ENCODE measurements at regions of chr15 and their contacts with region 1.

Region 1: DNA sequence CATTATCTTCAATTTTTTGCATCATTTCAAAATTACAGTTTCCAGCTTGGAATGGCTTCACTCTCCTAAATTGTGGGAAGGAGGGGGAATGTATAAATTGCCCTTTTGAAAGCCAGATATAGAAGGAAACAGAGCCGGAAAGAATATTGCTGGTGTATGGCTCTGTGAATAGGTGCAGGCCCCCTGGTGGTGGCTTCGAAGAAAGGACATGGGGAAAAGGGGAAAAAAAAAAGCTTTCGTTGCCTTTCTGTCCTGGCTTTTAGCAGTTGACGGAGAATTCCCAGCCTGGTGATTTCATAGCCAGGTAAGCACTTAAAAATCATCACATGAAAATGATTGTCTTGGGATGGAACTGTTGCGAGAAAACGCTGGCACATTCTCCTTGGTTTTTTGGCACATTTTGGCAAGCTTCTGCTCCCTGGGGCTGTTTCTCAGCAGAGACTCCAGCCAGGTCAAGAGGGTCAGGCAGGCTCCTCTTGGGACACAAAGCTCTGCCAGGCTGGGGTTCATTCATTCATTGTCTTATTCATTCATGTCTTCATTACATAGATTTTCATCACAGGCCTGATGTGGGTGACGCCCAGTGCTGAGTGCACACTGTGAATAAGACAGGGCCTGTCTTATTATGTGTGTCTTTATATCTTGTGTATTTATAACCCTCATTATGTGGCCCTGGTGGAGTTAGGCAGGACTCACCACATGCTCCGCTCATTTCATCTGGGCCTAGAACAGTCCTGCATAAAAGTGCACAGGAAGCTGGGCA is 300.0 kb upstream of the TPM1 start:
- DNase-seq: peak; percentile 59
- ATAC-seq: peak; percentile 82
- H3K4me3 ChIP-seq: peak overlapping the region in 1 of 2 experiments; percentile 30; a peak in 2 of 4 replicates
- H3K27ac ChIP-seq: no peak overlapping the region
- H3K4me1 ChIP-seq: peaks cover 7% of the 10 kb centered on the region; the same call in 1 of the 2 replicates
- H3K27me3 ChIP-seq: no peaks in the 10 kb centered on the region
- CTCF ChIP-seq: peak; percentile 94

Region 2: GRCh38 chr15:62389885-62390790 is 352.5 kb before region 1 on chr15:
- CTCF ChIA-PET with region 1: interaction called, 11 read pairs
- POLR2A ChIA-PET with region 1: no interaction called
- in situ Hi-C with region 1: no loop called
- intact Hi-C with region 1: no loop called
- DNase-seq: no peak
- ATAC-seq: peak; percentile 88
- H3K4me3 ChIP-seq: peak within 1 kb of the TSS; percentile 84 to 100
- H3K27ac ChIP-seq: peak within 1 kb of the TSS; percentile 94
- H3K4me1 ChIP-seq: peaks cover 5% of the 10 kb centered on the region
- H3K27me3 ChIP-seq: peaks cover 17% of the 10 kb centered on the region
- CTCF ChIP-seq: no peak

Region 3: DNA sequence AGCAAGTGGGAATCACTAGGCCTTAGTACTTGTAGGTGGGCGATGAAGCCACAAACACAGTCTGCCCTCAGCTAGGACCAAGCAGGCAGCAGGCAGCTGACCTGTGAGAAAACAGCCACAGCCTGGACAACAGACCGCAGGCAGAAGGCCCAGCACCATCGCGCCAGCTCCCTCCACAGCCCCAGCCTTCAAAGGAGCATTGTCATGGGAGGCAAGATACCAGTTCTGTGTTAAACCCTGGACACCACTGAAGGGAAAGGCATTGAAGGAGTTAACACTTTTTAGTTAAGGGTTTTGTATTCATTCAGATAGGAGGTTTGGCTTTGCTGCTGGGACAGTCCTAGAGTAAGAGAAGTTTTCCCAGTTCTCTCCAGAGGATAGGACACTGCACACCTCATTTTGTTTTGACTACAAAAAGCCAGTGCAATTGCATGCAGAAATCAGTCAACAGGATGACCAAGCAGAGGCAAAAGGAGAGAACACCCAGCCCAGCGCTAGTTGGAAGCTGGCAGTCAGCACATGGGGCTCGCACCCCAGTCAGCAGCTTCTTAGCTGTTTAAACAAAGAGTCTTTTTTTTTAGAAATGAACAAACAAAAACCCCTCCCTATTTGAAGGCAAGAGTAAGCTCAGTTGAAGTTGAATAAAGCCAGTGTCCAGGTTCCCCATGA is 13.9 kb after region 1 on chr15:
- CTCF ChIA-PET with region 1: interaction called, 11 read pairs
- POLR2A ChIA-PET with region 1: no interaction called
- in situ Hi-C with region 1: no loop called
- intact Hi-C with region 1: no loop called
- DNase-seq: no peak
- ATAC-seq: no peak
- H3K4me3 ChIP-seq: no peak overlapping the region
- H3K27ac ChIP-seq: no peak overlapping the region
- H3K4me1 ChIP-seq: no peaks in the 10 kb centered on the region
- H3K27me3 ChIP-seq: no peaks in the 10 kb centered on the region
- CTCF ChIP-seq: no peak

Region 4: DNA sequence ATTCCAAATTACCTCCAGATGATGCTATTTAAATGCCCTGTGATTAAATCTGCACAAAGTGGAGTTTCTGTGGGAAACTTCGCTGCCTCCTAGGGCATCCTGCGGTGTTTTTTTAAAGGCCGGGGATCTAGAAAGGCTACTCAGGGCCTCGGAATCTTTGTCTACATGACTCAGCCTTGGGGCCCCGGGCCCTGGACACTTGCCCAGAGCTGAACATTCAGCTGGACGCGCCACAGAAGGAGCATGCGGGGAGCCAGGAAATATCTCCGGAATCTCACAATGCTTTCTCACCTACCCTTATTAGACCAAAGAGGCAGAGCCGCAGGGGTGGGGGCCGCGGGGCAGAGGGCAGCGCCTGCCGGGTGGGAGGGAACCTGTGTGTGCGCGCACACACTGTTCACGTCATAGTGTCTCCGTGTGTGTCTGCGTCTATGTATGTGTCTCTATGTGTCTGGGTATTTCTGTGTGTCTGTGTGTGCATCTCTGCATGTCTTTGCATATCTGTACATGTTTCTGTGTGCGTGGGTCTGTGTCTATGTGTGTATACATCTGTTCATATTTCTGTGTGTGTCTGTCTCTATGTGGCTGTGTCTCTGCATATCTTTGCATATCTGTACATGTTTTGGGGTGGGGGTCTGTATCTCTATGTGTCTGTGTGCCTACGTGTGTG is 154.5 kb after region 1 on chr15:
- CTCF ChIA-PET with region 1: no interaction called
- POLR2A ChIA-PET with region 1: no interaction called
- in situ Hi-C with region 1: no loop called
- intact Hi-C with region 1: no loop called
- DNase-seq: peak; percentile 98
- ATAC-seq: peak; percentile 93
- H3K4me3 ChIP-seq: peak overlapping the region; percentile 2 to 23; a peak in 3 of 4 replicates
- H3K27ac ChIP-seq: peak overlapping the region; percentile 99
- H3K4me1 ChIP-seq: peaks cover 55% of the 10 kb centered on the region
- H3K27me3 ChIP-seq: no peaks in the 10 kb centered on the region
- CTCF ChIP-seq: no peak

Region 5: GRCh38 chr15:63104727-63105126 is 362.1 kb after region 1 on chr15:
- CTCF ChIA-PET with region 1: interaction called, 10 read pairs
- POLR2A ChIA-PET with region 1: no interaction called
- in situ Hi-C with region 1: no loop called
- intact Hi-C with region 1: no loop called
- DNase-seq: no peak
- ATAC-seq: no peak
- H3K4me3 ChIP-seq: no peak overlapping the region
- H3K27ac ChIP-seq: no peak overlapping the region
- H3K4me1 ChIP-seq: peaks cover 4% of the 10 kb centered on the region; the same call in 1 of the 2 replicates
- H3K27me3 ChIP-seq: no peaks in the 10 kb centered on the region
- CTCF ChIP-seq: no peak

Region 6: DNA sequence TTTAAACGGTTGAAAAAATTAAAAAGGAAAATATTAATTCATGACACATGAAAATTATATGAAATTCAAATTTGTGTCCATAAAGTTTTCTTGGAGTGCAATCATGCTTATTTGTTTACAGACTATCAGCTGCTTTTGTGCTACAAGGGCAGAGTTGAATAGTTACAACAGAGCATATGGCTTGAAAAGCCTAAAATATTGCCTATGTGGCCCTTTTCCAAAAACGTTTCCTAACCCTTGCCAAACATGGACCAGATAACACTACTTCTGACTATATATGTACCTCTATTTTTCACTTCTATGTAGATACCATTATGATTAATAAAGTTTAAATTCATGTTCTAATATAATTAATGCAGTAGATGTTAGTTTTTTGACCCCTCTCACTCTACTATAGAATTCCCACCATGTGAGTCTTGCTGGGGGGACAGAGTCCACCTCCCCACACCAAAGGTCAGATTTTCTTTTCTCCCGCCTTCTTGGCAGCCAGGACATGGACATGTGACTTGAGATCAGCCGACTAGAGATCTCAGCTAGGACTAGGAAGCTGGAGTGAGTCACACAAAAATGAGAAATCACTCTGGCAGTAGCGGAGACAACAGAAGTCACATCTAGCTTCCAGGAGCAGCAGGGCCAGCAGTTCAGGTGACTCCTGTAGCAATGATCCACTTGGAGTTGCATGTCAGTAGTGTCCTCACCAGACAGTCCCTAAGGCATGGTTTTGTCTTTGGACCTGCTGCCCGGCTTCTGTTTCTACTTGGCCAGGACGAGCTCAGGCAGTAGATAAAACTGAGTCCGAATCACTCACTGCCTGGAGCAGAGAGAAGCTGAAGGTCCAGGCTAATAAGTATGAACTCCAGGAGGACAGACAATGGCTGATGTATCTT is 1328.6 kb after region 1 on chr15:
- CTCF ChIA-PET with region 1: no interaction called
- POLR2A ChIA-PET with region 1: no interaction called
- in situ Hi-C with region 1: no loop called
- intact Hi-C with region 1: no loop called
- DNase-seq: peak; percentile 76
- ATAC-seq: peak; percentile 31; the same call in 1 of the 2 replicates
- H3K4me3 ChIP-seq: no peak overlapping the region
- H3K27ac ChIP-seq: peak overlapping the region; percentile 57
- H3K4me1 ChIP-seq: peaks cover 25% of the 10 kb centered on the region
- H3K27me3 ChIP-seq: no peaks in the 10 kb centered on the region
- CTCF ChIP-seq: no peak